ENCODE measurements at regions of chr14 and their contacts with region 1.

Region 1: DNA sequence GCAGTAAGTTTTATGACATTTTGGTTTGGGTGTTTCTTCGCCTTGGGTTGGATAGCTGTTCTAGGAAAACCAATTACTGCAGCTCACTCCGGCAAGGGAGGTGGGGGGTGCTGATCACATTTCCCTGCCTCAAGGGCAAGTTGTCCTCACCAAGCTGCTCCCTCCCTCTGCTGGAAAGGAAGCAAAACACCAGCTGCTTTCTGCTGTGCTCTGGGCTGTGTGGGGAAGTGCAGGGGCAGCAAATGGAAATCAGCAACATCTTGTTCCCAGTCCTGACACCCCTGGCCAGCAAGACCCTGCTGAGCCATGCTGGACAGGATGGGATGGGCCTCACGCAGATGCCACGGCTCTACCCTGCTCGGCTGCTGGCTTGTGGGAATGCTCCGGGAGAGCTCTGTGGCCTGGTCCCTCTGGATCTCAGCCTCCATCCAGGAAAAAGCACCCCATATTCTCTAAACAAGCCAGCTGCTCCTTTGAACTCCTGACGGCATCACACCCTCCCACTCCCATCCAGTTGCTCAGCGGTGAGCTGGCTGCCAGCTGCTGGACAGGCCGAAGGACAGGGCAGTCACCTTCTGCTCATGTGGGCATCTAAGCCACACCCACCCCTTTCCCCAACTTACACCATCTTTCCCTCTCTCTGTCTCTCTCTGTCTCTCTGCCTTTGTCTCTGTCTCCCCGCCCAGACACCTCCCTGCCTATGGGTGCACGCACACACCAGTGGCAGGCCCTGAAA is 52.4 kb upstream of the EIF5 start:
- DNase-seq: no peak
- H3K4me3 ChIP-seq: no peak overlapping the region
- CTCF ChIP-seq: no peak
- POLR2A ChIP-seq: no peak

Region 2: DNA sequence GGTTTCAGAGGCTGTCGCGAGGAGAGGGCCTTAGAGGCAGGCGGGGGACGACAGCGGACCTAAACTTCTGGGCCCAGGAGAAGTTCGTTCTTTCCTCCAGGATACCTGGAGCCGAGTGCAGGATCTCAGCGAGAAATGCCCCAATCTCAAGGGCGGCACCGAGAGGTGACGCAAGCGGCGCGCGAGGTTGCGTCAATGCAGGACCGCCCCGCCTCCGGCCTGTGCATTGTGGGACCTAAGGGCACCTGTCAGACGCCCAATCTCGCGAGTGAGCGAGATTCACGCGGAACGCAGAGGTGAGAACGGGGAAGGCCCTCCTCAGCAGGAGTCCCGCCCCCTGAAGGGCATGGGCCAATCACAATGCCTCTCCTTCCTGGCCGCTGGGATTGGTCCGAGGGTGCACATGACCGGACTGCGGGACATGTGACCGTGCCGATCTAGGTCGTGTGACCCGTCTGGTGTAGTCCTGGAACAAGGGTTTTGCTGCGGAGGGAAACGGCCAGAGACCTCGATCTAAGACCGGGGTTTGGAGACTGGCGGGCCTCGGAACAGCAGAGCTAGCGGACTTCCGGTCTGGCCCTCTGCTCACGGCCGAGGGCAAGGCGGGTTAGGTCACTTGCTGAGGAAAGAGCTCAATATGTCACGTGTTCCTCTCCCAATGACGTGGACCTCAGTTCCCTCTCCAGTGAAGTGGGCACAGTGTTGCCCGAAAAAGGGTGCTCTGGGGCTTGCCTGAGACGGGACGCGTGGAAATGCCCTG is 1333.6 kb before region 1 on chr14:
- intact Hi-C with region 1: loop called (anchors 5 kb)
- DNase-seq: peak; percentile 100
- H3K4me3 ChIP-seq: peak overlapping the region; percentile 54
- CTCF ChIP-seq: no peak
- POLR2A ChIP-seq: peak in 1 of 2 donors; percentile 82

Region 3: DNA sequence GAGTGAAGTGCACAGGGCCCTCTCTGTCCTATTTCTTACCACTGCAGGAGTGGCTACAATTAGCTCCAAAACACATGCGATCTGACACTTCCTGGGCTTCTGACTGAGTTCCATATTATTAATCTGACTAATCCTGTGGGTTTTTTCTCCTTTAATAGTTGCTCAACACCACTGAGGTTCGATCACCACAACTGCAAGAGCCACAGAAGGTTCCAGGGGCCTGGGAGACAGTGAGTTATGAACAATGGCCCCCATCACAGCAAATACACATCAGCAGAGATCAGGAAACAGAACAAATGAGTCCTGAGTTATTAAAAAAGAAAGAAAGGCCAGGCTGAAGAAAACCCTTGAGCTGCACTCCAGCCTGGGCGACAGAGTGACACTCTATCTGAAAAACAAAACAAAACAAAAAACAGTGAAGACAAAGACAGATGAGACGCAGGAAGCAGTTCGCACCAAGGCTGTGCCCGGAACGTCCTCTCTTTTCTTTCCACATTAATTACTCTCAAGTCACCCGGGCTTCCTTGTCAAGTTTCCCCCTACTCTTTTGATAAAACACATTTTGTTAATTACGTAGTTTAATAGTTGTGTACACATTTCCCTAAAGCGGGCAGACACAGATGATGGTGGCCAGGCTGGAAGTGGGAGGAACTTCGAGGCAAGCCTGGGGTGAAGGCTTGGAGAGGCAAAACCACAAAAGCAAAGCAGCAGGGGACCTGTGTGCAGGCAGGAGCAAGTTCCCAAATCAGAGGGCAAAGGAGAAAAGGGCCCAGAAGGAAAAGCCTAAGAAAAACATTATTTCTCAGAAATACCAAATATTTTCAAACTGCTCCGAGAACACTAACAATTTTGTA is 267.0 kb before region 1 on chr14:
- intact Hi-C with region 1: no loop called
- DNase-seq: no peak
- H3K4me3 ChIP-seq: no peak overlapping the region
- CTCF ChIP-seq: no peak
- POLR2A ChIP-seq: no peak